GM12878 (cell line): ENCODE measurements at regions of chr2 and their contacts with region 1.

Region 1: GRCh38 chr2:238263204-238264071 is 23.6 kb upstream of the HES6 start:
- DNase-seq: peak; percentile 15
- ATAC-seq: peak; percentile 96
- H3K4me3 ChIP-seq: no peak overlapping the region
- H3K27ac ChIP-seq: no peak overlapping the region
- H3K4me1 ChIP-seq: no peaks in the 10 kb centered on the region
- H3K27me3 ChIP-seq: no peaks in the 10 kb centered on the region
- CTCF ChIP-seq: peak; percentile 78 to 85 (median 80)
- EP300 ChIP-seq: no peak
- POLR2A ChIP-seq: no peak
- RAD21 ChIP-seq: peak; percentile 67

Region 2: GRCh38 chr2:237858294-237859081 is 404.9 kb before region 1 on chr2:
- CTCF ChIA-PET with region 1: interaction called, 10 read pairs
- POLR2A ChIA-PET with region 1: no interaction called
- RAD21 ChIA-PET with region 1: interaction called, 4 read pairs
- SMC1A ChIA-PET with region 1: interaction called, 6 read pairs
- in situ Hi-C with region 1: loop called (anchors 5 kb)
- intact Hi-C with region 1: loop called (anchors 5 kb)
- DNase-seq: peak; percentile 11
- ATAC-seq: peak; percentile 97
- H3K4me3 ChIP-seq: no peak overlapping the region
- H3K27ac ChIP-seq: no peak overlapping the region
- H3K4me1 ChIP-seq: no peaks in the 10 kb centered on the region
- H3K27me3 ChIP-seq: peaks cover 4 to 13% of the 10 kb centered on the region in 2 experiments
- CTCF ChIP-seq: peak; percentile 62 to 86 (median 76)
- EP300 ChIP-seq: no peak
- POLR2A ChIP-seq: no peak
- RAD21 ChIP-seq: peak; percentile 80

Region 3: DNA sequence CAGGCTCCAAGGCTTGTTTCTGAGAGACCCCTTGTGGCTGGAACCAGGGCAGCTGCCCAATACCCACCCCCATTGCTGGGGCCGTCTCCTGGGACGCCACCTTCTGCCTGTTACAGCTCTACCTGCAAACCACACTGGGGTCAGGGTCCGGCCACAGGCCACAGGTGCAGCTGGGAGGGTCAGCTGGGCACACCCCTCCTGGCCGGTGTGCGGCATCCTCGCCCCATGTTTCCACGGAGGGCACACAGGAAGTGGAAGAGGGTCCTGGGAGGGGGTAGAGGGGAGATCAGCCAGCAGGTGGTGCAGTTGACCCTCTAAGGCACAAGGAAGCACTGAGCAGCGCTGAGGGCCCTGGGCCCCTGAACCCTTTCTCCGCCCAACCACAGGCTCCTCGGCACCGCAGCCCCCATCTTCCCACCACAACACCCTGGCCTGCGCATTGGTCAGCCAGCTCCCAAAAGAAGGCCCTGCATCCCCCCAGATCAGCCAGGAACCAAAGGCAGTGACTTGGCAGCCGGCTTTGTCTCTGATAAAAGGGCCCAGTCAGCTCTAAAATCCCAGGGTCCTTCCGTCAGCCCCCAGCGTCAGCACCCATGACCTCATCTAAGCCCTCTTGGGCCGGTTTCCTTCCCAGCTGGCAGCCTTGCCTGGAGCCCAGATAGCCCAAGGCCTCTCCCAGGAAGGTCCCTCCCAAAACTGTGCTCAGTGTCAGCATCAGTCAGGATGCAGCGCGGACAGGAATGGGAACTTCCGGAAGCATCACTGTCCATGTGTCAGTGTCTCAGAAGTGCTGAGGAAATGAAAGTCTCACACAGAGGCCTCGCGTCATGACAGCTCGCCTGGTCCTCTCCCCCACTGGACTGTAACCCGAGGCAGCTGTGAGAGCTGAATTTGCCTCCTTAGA is 103.0 kb before region 1 on chr2:
- CTCF ChIA-PET with region 1: interaction called, 23 read pairs
- POLR2A ChIA-PET with region 1: no interaction called
- RAD21 ChIA-PET with region 1: interaction called, 13 read pairs
- SMC1A ChIA-PET with region 1: interaction called, 3 read pairs
- in situ Hi-C with region 1: no loop called
- intact Hi-C with region 1: loop called (anchors 2 kb)
- DNase-seq: no peak
- ATAC-seq: peak; percentile 79
- H3K4me3 ChIP-seq: no peak overlapping the region
- H3K27ac ChIP-seq: no peak overlapping the region
- H3K4me1 ChIP-seq: peaks cover 6% of the 10 kb centered on the region; the same call in 1 of the 2 replicates
- H3K27me3 ChIP-seq: peaks cover 3 to 12% of the 10 kb centered on the region in 2 experiments; a peak in 3 of 4 replicates
- CTCF ChIP-seq: peak; percentile 42 to 49 (median 47)
- EP300 ChIP-seq: no peak
- POLR2A ChIP-seq: no peak
- RAD21 ChIP-seq: no peak

Region 4: GRCh38 chr2:238225911-238226697 is 37.3 kb before region 1 on chr2:
- CTCF ChIA-PET with region 1: no interaction called
- POLR2A ChIA-PET with region 1: no interaction called
- RAD21 ChIA-PET with region 1: no interaction called
- SMC1A ChIA-PET with region 1: no interaction called
- in situ Hi-C with region 1: no loop called
- intact Hi-C with region 1: no loop called
- DNase-seq: no peak
- ATAC-seq: peak; percentile 70
- H3K4me3 ChIP-seq: no peak overlapping the region
- H3K27ac ChIP-seq: no peak overlapping the region
- H3K4me1 ChIP-seq: no peaks in the 10 kb centered on the region
- H3K27me3 ChIP-seq: no peaks in the 10 kb centered on the region; a peak in 4 of 4 replicates
- CTCF ChIP-seq: no peak
- EP300 ChIP-seq: no peak
- POLR2A ChIP-seq: no peak
- RAD21 ChIP-seq: no peak

Region 5: GRCh38 chr2:238288650-238289573 is 25.5 kb after region 1 on chr2:
- CTCF ChIA-PET with region 1: interaction called, 27 read pairs
- POLR2A ChIA-PET with region 1: interaction called, 4 read pairs
- RAD21 ChIA-PET with region 1: no interaction called
- SMC1A ChIA-PET with region 1: interaction called, 4 read pairs
- in situ Hi-C with region 1: no loop called
- intact Hi-C with region 1: no loop called
- DNase-seq: peak; percentile 92
- ATAC-seq: peak; percentile 88
- H3K4me3 ChIP-seq: peak overlapping the region; percentile 74
- H3K27ac ChIP-seq: peak overlapping the region; percentile 79
- H3K4me1 ChIP-seq: peaks cover 15% of the 10 kb centered on the region
- H3K27me3 ChIP-seq: no peaks in the 10 kb centered on the region
- CTCF ChIP-seq: peak; percentile 12 to 36 (median 25); a peak in 3 of 6 replicates
- EP300 ChIP-seq: no peak
- POLR2A ChIP-seq: peak; percentile 85
- RAD21 ChIP-seq: no peak